ENCODE measurements at regions of chr11 and their contacts with region 1.

Region 1: DNA sequence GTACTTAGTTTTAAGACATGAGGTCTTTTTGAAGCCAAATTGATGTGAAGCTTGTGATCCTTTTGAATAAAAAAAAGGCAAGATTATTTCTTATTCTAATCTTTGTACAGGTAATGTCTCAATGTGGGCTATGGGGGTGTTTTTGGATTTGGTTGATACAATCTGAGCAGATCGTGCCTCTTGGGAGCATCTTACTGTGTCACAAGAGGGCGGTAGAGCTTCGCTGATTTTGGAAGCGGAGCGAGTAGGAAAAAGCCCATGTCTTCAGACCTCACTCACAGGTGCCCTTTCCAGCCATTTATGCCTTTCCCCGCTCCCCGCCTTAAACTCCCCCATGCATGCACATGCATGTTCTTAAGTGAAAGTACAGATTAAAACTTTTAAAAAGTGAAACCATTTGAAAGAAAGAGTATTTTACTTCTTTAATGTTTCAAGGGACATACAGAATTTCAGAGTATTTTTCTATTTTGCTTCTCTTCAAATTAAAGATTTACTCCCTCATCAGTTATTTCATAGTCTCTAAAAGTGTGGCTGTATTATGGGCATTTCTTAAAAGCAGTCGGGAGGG is 18.8 kb downstream of the DDX25 start:
- DNase-seq: peak; percentile 68
- ATAC-seq: peak; percentile 77
- H3K4me3 ChIP-seq: no peak overlapping the region
- H3K27ac ChIP-seq: no peak overlapping the region
- H3K4me1 ChIP-seq: no peaks in the 10 kb centered on the region
- H3K27me3 ChIP-seq: peaks cover 41% of the 10 kb centered on the region
- CTCF ChIP-seq: peak; percentile 83
- POLR2A ChIP-seq: no peak
- RAD21 ChIP-seq: peak; percentile 93

Region 2: GRCh38 chr11:125874556-125875124 is 48.5 kb before region 1 on chr11:
- CTCF ChIA-PET with region 1: no interaction called
- POLR2A ChIA-PET with region 1: no interaction called
- dilution Hi-C with region 1: no loop called
- in situ Hi-C with region 1: no loop called
- intact Hi-C with region 1: no loop called
- DNase-seq: peak; percentile 70
- ATAC-seq: peak; percentile 98
- H3K4me3 ChIP-seq: no peak overlapping the region
- H3K27ac ChIP-seq: no peak overlapping the region
- H3K4me1 ChIP-seq: no peaks in the 10 kb centered on the region
- H3K27me3 ChIP-seq: peaks cover 2% of the 10 kb centered on the region
- CTCF ChIP-seq: peak; percentile 82
- POLR2A ChIP-seq: no peak
- RAD21 ChIP-seq: peak; percentile 84

Region 3: GRCh38 chr11:126062679-126063506 is 139.8 kb after region 1 on chr11 and contains the start of gene CDON:
- CTCF ChIA-PET with region 1: no interaction called
- POLR2A ChIA-PET with region 1: no interaction called
- dilution Hi-C with region 1: no loop called
- in situ Hi-C with region 1: no loop called
- intact Hi-C with region 1: loop called (anchors 2 kb)
- DNase-seq: peak; percentile 87
- ATAC-seq: peak; percentile 99
- H3K4me3 ChIP-seq: peak within 1 kb of the TSS; percentile 61
- H3K27ac ChIP-seq: peak within 1 kb of the TSS; percentile 74
- H3K4me1 ChIP-seq: no peaks in the 10 kb centered on the region
- H3K27me3 ChIP-seq: peaks cover 24% of the 10 kb centered on the region
- CTCF ChIP-seq: peak; percentile 29; the same call in 1 of the 2 replicates
- POLR2A ChIP-seq: no peak
- RAD21 ChIP-seq: 0 out of 2 replicates have a peak, but pooled peaks have one; percentile 10
- total RNA-seq, gene CDON: 2.2 and 3.8 TPM in 2 replicates

Region 4: DNA sequence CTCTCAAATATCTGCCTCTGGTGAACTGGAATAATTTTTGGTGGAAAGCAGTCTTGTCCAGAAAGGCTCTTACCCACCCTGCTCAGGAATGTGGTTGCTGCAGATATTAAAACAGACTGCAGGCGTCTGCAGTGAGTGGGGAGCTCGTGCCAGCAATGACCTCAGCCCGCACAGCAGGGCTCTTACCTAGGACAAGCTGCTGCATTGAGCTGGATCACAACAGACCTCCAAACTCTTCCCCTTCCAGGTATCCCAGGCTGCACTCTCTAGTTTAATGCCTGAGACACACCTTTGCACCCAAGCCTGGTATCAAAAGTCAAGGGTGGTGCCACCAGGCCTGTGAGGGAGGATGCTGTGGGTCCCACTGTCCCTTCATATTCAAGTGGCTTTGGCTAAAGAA is 209.2 kb after region 1 on chr11:
- CTCF ChIA-PET with region 1: no interaction called
- POLR2A ChIA-PET with region 1: no interaction called
- dilution Hi-C with region 1: no loop called
- in situ Hi-C with region 1: no loop called
- intact Hi-C with region 1: no loop called
- DNase-seq: no peak
- ATAC-seq: no peak
- H3K4me3 ChIP-seq: no peak overlapping the region
- H3K27ac ChIP-seq: no peak overlapping the region
- H3K4me1 ChIP-seq: peaks cover 3% of the 10 kb centered on the region; the same call in 1 of the 2 replicates
- H3K27me3 ChIP-seq: peaks cover 74% of the 10 kb centered on the region
- CTCF ChIP-seq: no peak
- POLR2A ChIP-seq: no peak
- RAD21 ChIP-seq: no peak

Measured in IMR-90 (cell line).